ENCODE measurements at regions of chr18 and their contacts with region 1.

Region 1: DNA sequence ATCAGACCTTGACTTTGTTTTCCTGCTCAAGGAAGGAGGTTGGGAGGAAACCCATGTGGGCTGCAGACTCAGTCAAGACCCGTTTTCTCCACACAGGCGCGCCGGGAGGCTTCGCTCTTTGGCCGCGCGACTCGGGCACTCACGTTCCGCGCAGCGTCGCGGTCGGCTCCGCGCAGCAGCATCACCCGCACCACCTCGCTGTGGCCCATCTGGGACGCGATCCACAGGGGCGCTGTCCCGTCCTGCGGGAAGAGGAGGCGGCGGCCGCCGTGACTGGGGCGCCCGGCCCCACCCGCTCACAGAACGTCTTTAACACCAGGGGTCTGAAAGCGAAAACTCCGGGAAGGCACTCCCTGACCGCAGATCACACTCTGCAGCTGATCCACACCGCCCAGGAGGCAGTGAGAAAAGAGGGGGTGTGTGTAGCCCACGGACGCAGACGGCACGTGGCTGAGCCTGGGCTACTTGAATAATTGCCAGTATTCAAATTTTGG is 33.1 kb upstream of the NPC1 start:
- DNase-seq: no peak
- ATAC-seq: no peak
- H3K4me3 ChIP-seq: no peak overlapping the region
- H3K27ac ChIP-seq: peak overlapping the region; percentile 59 to 86; a peak in 5 of 6 replicates
- H3K4me1 ChIP-seq: peaks cover 40% of the 10 kb centered on the region
- CTCF ChIP-seq: no peak
- EP300 ChIP-seq: no peak
- POLR2A ChIP-seq: no peak
- RAD21 ChIP-seq: no peak

Region 2: DNA sequence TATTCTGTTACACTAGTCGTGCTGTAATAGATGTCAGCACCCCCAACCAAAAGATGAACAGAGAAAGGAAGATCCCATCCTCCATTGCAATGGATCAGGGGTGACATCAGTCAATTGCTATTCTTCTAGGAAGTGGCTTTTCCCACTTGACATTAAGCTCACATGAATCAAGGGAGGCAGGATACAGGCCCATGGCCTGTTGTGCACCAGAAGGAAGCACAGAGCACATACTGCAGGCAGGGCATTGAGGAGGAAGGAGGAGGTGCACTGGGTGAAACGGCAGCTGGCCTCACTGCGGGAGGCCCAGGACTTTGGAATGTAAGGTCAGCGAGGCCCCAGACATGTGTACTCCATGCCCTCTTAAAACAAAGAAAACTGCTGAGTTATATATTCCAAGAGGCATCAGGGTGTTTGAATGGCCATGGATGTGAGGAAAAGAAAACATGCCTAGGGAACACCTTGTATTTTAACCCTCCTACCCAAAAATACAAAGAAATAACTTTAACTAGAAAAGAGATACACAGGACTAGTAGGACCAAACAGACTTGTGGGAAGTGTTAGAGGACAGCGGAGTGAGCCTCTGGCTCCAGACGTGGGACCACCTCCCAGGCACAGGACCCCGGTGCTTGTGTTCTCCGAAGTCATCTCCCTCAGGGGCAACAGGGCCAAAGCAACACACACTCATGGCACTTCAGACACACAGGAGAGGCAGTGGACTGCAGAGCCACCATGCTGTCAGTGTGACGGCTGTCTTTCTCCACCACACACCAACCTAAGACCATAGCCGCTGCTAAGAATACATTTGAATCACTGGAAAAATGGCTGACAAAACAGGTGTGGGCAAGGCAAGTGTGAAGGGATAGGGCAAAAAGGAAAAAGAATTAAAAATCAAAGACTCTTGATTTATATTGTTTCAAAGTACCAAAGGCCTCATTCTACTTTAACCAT is 217.8 kb before region 1 on chr18:
- CTCF ChIA-PET with region 1: no interaction called
- POLR2A ChIA-PET with region 1: no interaction called
- DNase-seq: peak in 1 of 2 experiments; percentile 27
- ATAC-seq: peak; percentile 56 to 77; a peak in 4 of 6 replicates
- H3K4me3 ChIP-seq: no peak overlapping the region
- H3K27ac ChIP-seq: peak overlapping the region; percentile 54 to 81; a peak in 5 of 6 replicates
- H3K4me1 ChIP-seq: peaks cover 25% of the 10 kb centered on the region
- CTCF ChIP-seq: no peak
- EP300 ChIP-seq: no peak
- POLR2A ChIP-seq: no peak
- RAD21 ChIP-seq: no peak

Region 3: DNA sequence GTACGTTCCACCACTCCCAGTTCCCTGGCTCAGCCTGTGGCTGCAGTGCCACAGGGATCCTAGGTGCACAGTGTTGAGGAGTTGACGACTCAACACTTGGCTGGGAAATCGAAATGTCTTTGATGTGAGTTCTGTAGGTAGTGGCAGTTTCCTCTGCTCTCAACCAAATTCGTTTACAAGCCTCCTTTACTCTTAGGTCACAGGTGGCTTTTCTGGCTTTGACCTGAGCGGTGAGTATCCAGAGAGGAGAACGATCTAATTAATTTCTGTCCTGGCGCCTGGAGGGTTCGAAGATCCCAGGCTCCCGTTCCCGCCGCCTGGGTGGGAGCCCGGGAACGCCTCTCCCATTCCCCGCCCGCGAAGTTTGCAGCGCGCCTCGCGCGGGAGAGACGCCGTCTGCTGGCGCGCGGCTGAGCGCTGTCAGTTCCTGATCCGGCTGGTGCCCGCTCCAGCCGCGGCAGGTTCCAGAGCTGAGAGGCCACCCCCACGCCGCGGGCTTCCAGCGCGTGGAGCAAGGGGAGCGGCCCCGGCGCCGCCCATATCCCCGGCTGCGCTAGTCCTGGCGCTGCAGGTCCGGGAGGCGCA is 69.7 kb after region 1 on chr18 and contains the start of gene LAMA3:
- CTCF ChIA-PET with region 1: interaction called, 11 read pairs
- POLR2A ChIA-PET with region 1: no interaction called
- DNase-seq: peak; percentile 46 to 65
- ATAC-seq: peak; percentile 79 to 89
- H3K4me3 ChIP-seq: peak within 1 kb of the TSS; percentile 67
- H3K27ac ChIP-seq: peak within 1 kb of the TSS; percentile 84 to 97
- H3K4me1 ChIP-seq: peaks cover 31% of the 10 kb centered on the region
- CTCF ChIP-seq: peak; percentile 31; the same call in 2 of the 3 replicates
- EP300 ChIP-seq: no peak
- POLR2A ChIP-seq: peak; percentile 35
- RAD21 ChIP-seq: peak in 1 of 2 experiments; percentile 47; a peak in 3 of 5 replicates
- polyA plus RNA-seq, gene LAMA3: 31.0 and 40.1 TPM in 2 replicates

Measured in A549 (cell line).